ENCODE measurements at regions of chr19 and their contacts with region 1.

Region 1: GRCh38 chr19:35899547-35900214 is 659 bp downstream of the NFKBID start:
- DNase-seq: peak; percentile 82
- H3K4me3 ChIP-seq: peak overlapping the region; percentile 82 to 96 (median 84)
- H3K27ac ChIP-seq: peak overlapping the region; percentile 78
- H3K4me1 ChIP-seq: peaks cover 27% of the 10 kb centered on the region
- H3K27me3 ChIP-seq: no peaks in the 10 kb centered on the region
- CTCF ChIP-seq: no peak

Region 2: DNA sequence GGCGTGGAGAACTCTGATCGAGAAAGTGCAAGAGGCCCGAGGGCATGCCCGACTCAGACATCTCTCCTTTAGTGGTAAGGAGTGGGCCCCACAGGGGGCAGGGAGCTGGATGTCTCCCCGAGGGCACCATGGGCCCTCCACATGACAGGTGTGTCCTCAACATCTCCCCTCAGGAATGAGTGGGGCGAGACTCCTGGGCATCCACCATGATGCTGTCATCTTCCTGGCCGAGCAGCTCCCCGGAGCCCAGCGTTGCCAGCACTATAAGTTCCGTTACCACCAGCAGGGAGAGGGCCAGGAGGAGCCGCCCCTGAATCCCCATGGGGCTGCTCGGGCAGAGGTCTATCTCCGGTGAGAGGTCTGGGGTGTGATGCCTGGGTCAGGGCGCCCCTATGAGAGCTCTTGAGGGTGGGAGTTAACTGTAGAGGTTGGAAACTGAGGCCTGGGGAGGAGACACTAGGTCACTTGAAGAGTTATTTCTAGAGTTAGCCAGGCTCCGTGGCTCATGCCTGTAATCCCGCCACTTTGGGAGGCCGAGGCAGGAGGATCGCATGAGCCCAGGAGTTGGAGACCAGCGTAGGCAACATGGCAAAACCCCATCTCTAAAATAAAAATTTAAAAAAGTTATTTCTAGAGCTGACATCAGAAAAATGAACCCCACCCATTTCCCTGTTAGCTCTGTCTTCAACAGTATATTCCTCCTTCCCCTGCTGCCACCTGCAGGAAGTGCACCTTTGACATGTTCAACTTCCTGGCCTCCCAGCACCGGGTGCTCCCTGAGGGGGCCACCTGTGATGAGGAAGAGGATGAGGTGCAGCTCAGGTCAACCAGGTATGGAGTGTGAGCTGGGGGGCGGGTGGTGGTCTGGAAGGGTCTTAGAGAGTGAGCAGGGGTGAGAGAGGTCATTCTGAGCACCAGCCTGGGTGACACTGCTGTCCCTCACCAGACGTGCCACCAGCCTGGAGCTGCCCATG is 162.5 kb before region 1 on chr19:
- CTCF ChIA-PET with region 1: no interaction called
- dilution Hi-C with region 1: loop called (anchors 10 kb)
- in situ Hi-C with region 1: no loop called
- intact Hi-C with region 1: no loop called
- DNase-seq: no peak
- H3K4me3 ChIP-seq: no peak overlapping the region
- H3K27ac ChIP-seq: no peak overlapping the region
- H3K4me1 ChIP-seq: peaks cover 9% of the 10 kb centered on the region
- H3K27me3 ChIP-seq: no peaks in the 10 kb centered on the region
- CTCF ChIP-seq: peak in 1 of 2 donors; percentile 12

Region 3: GRCh38 chr19:35833972-35834371 is 65.7 kb before region 1 on chr19:
- CTCF ChIA-PET with region 1: no interaction called
- dilution Hi-C with region 1: loop called (anchors 10 kb)
- in situ Hi-C with region 1: no loop called
- intact Hi-C with region 1: no loop called
- DNase-seq: no peak
- H3K4me3 ChIP-seq: no peak overlapping the region
- H3K27ac ChIP-seq: no peak overlapping the region
- H3K4me1 ChIP-seq: no peaks in the 10 kb centered on the region
- H3K27me3 ChIP-seq: no peaks in the 10 kb centered on the region
- CTCF ChIP-seq: no peak

Region 4: GRCh38 chr19:35931161-35931873 is 31.6 kb after region 1 on chr19:
- CTCF ChIA-PET with region 1: no interaction called
- dilution Hi-C with region 1: no loop called
- in situ Hi-C with region 1: no loop called
- intact Hi-C with region 1: loop called (anchors 1 kb)
- DNase-seq: peak; percentile 99
- H3K4me3 ChIP-seq: peak overlapping the region; percentile 23 to 43 (median 37)
- H3K27ac ChIP-seq: no peak overlapping the region
- H3K4me1 ChIP-seq: peaks cover 8% of the 10 kb centered on the region
- H3K27me3 ChIP-seq: no peaks in the 10 kb centered on the region
- CTCF ChIP-seq: peak; percentile 77 to 97

Region 5: DNA sequence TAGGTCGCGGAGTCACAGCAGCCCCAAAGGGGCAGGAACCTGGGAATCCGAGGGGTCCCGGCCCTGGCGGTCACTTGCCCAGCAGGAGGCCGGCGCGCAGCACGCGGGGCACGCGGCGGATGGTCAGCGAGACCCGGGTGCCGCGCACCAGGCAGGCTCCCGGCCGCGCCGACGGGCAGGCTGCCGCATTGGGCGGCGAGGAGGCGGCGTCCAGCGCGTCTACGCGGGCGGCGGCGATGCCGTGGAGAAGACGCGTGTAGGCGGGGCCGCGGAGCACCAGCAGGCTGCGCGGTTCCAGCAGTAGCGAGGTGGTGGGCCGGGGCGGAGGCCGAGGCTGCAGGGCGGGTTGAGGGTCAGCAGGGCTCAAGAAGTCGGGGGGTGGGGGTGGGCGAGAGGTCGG is 109.5 kb after region 1 on chr19:
- CTCF ChIA-PET with region 1: no interaction called
- dilution Hi-C with region 1: loop called (anchors 5 kb)
- in situ Hi-C with region 1: no loop called
- intact Hi-C with region 1: no loop called
- DNase-seq: no peak
- H3K4me3 ChIP-seq: peak overlapping the region; percentile 33 to 44 (median 33)
- H3K27ac ChIP-seq: no peak overlapping the region
- H3K4me1 ChIP-seq: peaks cover 10% of the 10 kb centered on the region
- H3K27me3 ChIP-seq: no peaks in the 10 kb centered on the region
- CTCF ChIP-seq: peak in 1 of 2 donors; percentile 7